ENCODE measurements at regions of chr3 and their contacts with region 1.

Region 1: GRCh38 chr3:66220602-66221377 is at the start of gene SLC25A26:
- DNase-seq: peak; percentile 99
- H3K4me3 Mint-ChIP-seq: peak within 1 kb of the TSS; percentile 91
- H3K27ac Mint-ChIP-seq: peak within 1 kb of the TSS; percentile 95
- H3K4me1 Mint-ChIP-seq: peaks cover 51% of the 10 kb centered on the region
- H3K27me3 Mint-ChIP-seq: no peaks in the 10 kb centered on the region
- total RNA-seq, gene SLC25A26: 25.3 to 26.3 TPM

Region 2: GRCh38 chr3:65979162-65979561 is 241.6 kb before region 1 on chr3:
- CTCF ChIA-PET with region 1: no interaction called
- intact Hi-C with region 1: no loop called
- DNase-seq: no peak
- H3K4me3 Mint-ChIP-seq: no peak overlapping the region
- H3K27ac Mint-ChIP-seq: no peak overlapping the region
- H3K4me1 Mint-ChIP-seq: no peaks in the 10 kb centered on the region
- H3K27me3 Mint-ChIP-seq: peaks cover 2% of the 10 kb centered on the region

Region 3: DNA sequence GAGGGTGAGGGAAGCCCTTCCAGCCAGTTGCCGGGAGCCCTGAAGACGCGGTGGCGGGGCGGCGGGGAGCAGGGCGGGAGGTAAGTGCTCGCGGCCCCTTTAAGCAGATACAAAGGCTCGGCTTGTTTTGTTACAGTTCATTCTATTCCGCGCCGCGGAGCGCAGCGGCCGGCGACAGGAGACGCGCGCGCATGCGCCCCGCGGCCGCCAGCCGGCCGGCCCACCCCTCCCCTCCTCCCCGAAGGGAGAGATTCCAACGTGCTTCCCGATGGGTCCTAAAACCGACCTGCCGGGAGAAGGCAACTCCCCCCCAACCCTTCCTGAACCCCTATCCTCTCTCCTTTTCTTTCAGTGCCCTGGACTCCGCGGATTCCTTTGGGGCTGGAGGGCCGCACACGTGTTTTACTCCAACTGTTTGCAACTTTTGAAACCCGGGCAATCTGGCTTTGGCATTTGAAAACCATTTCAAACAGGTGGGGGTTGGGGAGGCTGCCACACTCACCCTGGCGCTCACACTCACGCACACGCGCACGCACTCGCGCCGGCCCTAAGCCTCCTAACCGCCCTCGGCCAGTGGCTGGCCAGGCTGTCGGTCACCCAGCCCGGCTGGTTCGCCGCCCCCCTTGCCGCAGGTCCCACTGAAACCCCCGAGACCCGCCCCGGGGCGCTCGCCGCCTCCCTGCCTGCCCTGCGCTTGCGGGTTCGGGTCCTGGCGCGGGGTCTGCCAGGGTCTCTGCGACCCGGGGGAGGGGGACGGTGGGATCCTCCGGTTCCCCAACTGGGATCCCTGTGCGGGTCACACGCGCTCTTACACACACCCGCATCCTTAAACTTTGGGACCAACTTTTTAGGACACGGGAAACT is 181.8 kb before region 1 on chr3 and contains the start of gene MAGI1:
- CTCF ChIA-PET with region 1: no interaction called
- intact Hi-C with region 1: loop called (anchors 5 kb)
- DNase-seq: peak; percentile 24
- H3K4me3 Mint-ChIP-seq: peak within 1 kb of the TSS; percentile 79
- H3K27ac Mint-ChIP-seq: no peak within 1 kb of the TSS
- H3K4me1 Mint-ChIP-seq: peaks cover 9% of the 10 kb centered on the region
- H3K27me3 Mint-ChIP-seq: peaks cover 64% of the 10 kb centered on the region
- total RNA-seq, gene MAGI1: not detected

Region 4: GRCh38 chr3:66239513-66240123 is 18.8 kb after region 1 on chr3:
- CTCF ChIA-PET with region 1: interaction called, 4 read pairs
- intact Hi-C with region 1: loop called (anchors 1 kb)
- DNase-seq: peak; percentile 64
- H3K4me3 Mint-ChIP-seq: peak overlapping the region; percentile 5
- H3K27ac Mint-ChIP-seq: peak overlapping the region; percentile 86
- H3K4me1 Mint-ChIP-seq: peaks cover 30% of the 10 kb centered on the region
- H3K27me3 Mint-ChIP-seq: no peaks in the 10 kb centered on the region

Region 5: GRCh38 chr3:67077656-67078055 is 856.9 kb after region 1 on chr3:
- CTCF ChIA-PET with region 1: no interaction called
- intact Hi-C with region 1: loop called (anchors 5 kb)
- DNase-seq: peak; percentile 16
- H3K4me3 Mint-ChIP-seq: no peak overlapping the region
- H3K27ac Mint-ChIP-seq: no peak overlapping the region
- H3K4me1 Mint-ChIP-seq: peaks cover 50% of the 10 kb centered on the region
- H3K27me3 Mint-ChIP-seq: no peaks in the 10 kb centered on the region

Region 6: GRCh38 chr3:67357610-67358458 is 1137.0 kb after region 1 on chr3:
- CTCF ChIA-PET with region 1: no interaction called
- intact Hi-C with region 1: loop called (anchors 10 kb)
- DNase-seq: no peak
- H3K4me3 Mint-ChIP-seq: no peak overlapping the region
- H3K27ac Mint-ChIP-seq: no peak overlapping the region
- H3K4me1 Mint-ChIP-seq: peaks cover 24% of the 10 kb centered on the region
- H3K27me3 Mint-ChIP-seq: no peaks in the 10 kb centered on the region

Measured in activated naive CD4-positive, alpha-beta T cell treated with anti-CD3 and anti-CD28 coated beads for 36 hours (primary cell).